H1 (cell line): ENCODE measurements at regions of chr3 and their contacts with region 1.

Region 1: GRCh38 chr3:10945683-10946287 is 46.8 kb upstream of the SLC6A1 start:
- DNase-seq: peak; percentile 64 to 92
- H3K4me3 ChIP-seq: no peak overlapping the region
- H3K27ac ChIP-seq: no peak overlapping the region
- H3K4me1 ChIP-seq: no peaks in the 10 kb centered on the region
- H3K27me3 ChIP-seq: no peaks in the 10 kb centered on the region; a peak in 1 of 7 replicates
- CTCF ChIP-seq: peak; percentile 79 to 96 (median 89)
- EP300 ChIP-seq: no peak
- POLR2A ChIP-seq: no peak
- RAD21 ChIP-seq: peak; percentile 84 to 94

Region 2: DNA sequence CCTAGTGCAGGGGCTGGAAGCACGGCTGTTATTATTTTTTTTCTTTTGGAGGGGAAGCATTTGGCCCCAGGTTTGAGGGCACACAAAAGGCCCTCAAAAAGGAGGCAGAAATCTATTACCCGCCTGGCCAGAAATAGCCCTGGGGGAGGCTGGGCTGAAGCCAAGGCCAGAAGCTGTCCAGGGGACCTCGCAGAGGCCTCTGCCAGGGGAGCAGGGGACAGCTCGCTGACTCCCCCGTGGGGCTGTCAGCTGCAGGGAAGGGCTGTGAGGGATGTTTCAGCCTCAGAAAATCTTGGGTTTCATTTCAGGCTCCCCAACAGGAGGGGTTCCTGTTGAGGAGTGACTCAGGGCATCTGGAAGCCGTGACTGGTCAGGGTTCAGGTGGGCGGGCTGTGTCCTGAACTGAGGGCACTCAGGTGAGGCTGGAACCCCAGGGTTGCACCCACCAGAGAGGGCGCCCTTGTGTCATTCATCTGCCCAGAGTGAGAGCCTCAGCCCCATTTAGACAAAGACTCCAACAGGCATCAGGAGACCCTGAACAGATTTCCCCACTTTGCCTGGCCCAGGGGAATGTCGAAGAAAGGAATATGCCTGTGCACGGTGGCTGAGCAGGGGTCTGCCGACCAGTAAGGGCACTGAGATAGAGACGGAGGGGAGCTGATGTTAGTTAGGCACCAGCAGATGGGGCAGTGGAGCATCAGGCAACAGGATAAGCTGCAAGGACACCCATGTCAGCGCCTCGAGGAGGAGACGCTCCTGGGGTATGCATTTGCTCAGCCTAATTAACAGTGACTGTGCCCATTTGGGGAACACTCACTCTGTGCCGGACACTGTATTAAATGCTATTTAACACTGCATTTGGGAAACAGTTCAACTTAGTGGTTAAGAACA is 173.3 kb before region 1 on chr3:
- CTCF ChIA-PET with region 1: interaction called, 21 read pairs
- POLR2A ChIA-PET with region 1: no interaction called
- DNase-seq: peak; percentile 43 to 89
- H3K4me3 ChIP-seq: no peak overlapping the region
- H3K27ac ChIP-seq: no peak overlapping the region
- H3K4me1 ChIP-seq: no peaks in the 10 kb centered on the region; a peak in 1 of 7 replicates
- H3K27me3 ChIP-seq: peaks cover 0 to 5% (median under 1%) of the 10 kb centered on the region in 4 experiments; a peak in 2 of 7 replicates
- CTCF ChIP-seq: peak; percentile 59 to 74 (median 67)
- EP300 ChIP-seq: no peak
- POLR2A ChIP-seq: no peak
- RAD21 ChIP-seq: peak; percentile 28 to 29

Region 3: GRCh38 chr3:10926811-10927521 is 18.8 kb before region 1 on chr3:
- CTCF ChIA-PET with region 1: interaction called, 26 read pairs
- POLR2A ChIA-PET with region 1: no interaction called
- DNase-seq: no peak
- H3K4me3 ChIP-seq: no peak overlapping the region
- H3K27ac ChIP-seq: no peak overlapping the region
- H3K4me1 ChIP-seq: no peaks in the 10 kb centered on the region; a peak in 1 of 7 replicates
- H3K27me3 ChIP-seq: no peaks in the 10 kb centered on the region
- CTCF ChIP-seq: no peak
- EP300 ChIP-seq: no peak
- POLR2A ChIP-seq: no peak
- RAD21 ChIP-seq: no peak

Region 4: DNA sequence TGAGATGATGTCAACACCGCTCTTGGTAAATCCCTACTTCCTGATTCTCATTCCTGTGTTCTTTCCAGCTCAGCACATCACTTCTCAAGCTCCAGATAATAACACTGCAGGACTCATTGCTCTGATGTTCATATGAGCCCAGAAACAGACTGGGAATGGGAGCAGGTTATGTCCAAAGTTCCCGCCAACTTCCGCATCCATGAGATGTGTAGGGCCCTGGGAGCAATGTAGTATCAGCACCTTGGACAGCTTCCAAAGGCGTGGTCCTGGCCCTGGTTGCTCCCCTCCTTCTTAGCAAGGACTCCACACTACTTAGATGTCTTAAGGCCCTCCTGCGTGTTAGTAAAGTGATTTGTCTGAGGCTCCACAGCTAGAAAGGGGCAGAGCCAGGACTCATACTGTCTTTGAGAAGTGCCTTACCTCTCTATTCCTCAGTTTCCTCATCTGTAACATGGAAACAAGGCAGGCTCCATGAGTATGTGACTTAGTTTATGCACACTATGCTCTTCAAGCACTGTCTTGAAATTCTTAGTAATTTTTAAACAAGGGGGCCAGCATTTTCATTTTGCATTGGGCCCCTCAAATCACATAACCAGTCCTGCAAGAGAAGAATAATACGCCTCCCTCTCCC is 18.9 kb after region 1 on chr3:
- CTCF ChIA-PET with region 1: interaction called, 62 read pairs
- POLR2A ChIA-PET with region 1: no interaction called
- DNase-seq: peak in 1 of 2 experiments; percentile 70
- H3K4me3 ChIP-seq: no peak overlapping the region
- H3K27ac ChIP-seq: no peak overlapping the region
- H3K4me1 ChIP-seq: peaks cover 0 to 9% (median 3%) of the 10 kb centered on the region in 4 experiments; a peak in 5 of 7 replicates
- H3K27me3 ChIP-seq: no peaks in the 10 kb centered on the region; a peak in 1 of 7 replicates
- CTCF ChIP-seq: no peak
- EP300 ChIP-seq: no peak
- POLR2A ChIP-seq: no peak
- RAD21 ChIP-seq: no peak

Region 5: GRCh38 chr3:10992017-10992941 is 46.5 kb after region 1 on chr3 and contains the start of gene SLC6A1:
- CTCF ChIA-PET with region 1: interaction called, 207 read pairs
- POLR2A ChIA-PET with region 1: no interaction called
- DNase-seq: peak in 1 of 2 experiments; percentile 83
- H3K4me3 ChIP-seq: peak within 1 kb of the TSS; percentile 66 to 86 (median 75)
- H3K27ac ChIP-seq: no peak within 1 kb of the TSS
- H3K4me1 ChIP-seq: peaks cover 0 to 11% (median 5%) of the 10 kb centered on the region in 4 experiments; a peak in 5 of 7 replicates
- H3K27me3 ChIP-seq: peaks cover 20 to 41% (median 39%) of the 10 kb centered on the region in 4 experiments
- CTCF ChIP-seq: peak; percentile 62 to 71 (median 71)
- EP300 ChIP-seq: no peak
- POLR2A ChIP-seq: no peak
- RAD21 ChIP-seq: peak; percentile 50 to 63; a peak in 3 of 4 replicates
- total RNA-seq, gene SLC6A1: 0.30 and 0.31 TPM in 2 replicates

Region 6: GRCh38 chr3:11014253-11014652 is 68.5 kb after region 1 on chr3:
- CTCF ChIA-PET with region 1: interaction called, 48 read pairs
- POLR2A ChIA-PET with region 1: no interaction called
- DNase-seq: no peak
- H3K4me3 ChIP-seq: no peak overlapping the region
- H3K27ac ChIP-seq: no peak overlapping the region
- H3K4me1 ChIP-seq: no peaks in the 10 kb centered on the region; a peak in 1 of 7 replicates
- H3K27me3 ChIP-seq: no peaks in the 10 kb centered on the region
- CTCF ChIP-seq: no peak
- EP300 ChIP-seq: no peak
- POLR2A ChIP-seq: no peak
- RAD21 ChIP-seq: no peak

Region 7: GRCh38 chr3:11164607-11165006 is 218.8 kb after region 1 on chr3:
- CTCF ChIA-PET with region 1: no interaction called
- POLR2A ChIA-PET with region 1: no interaction called
- DNase-seq: no peak
- H3K4me3 ChIP-seq: no peak overlapping the region
- H3K27ac ChIP-seq: no peak overlapping the region
- H3K4me1 ChIP-seq: no peaks in the 10 kb centered on the region; a peak in 2 of 7 replicates
- H3K27me3 ChIP-seq: no peaks in the 10 kb centered on the region; a peak in 2 of 7 replicates
- CTCF ChIP-seq: no peak
- EP300 ChIP-seq: no peak
- POLR2A ChIP-seq: no peak
- RAD21 ChIP-seq: no peak